GM12878 (cell line): ENCODE measurements at regions of chr22 and their contacts with region 1.

Region 1: DNA sequence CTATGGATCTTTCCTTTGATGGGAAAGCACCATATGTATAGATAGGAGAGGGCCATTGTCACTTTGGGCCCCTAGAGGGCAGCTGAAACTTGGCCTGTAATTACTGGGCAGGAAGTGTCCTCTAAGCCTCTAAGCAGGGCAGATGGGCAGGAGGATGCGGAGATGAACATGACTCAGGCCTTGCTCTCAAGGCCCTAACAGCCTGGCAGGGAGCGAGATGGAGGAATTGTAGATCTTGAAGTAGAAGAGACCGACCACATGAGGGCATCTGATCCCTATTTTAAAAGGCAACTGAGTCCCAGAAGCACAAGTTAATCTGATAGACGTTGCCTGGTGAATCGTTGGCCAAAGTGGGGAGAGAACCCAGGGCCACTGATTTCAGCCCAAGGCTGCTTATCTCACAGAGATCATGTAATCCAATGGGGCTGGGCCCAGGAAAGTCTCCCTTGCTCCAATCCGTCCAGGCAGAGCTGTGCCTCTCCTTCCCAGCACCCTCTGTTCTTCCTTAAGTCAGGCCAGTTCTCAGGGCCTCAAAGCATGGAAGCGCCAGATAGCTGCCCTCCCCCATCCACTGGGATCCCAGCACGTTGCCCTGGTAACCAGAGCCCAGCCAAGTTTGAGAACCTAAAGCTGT is 2.5 kb upstream of the SEPTIN3 start:
- DNase-seq: peak; percentile 54
- ATAC-seq: peak; percentile 89
- H3K4me3 ChIP-seq: no peak overlapping the region
- H3K27ac ChIP-seq: no peak overlapping the region
- H3K4me1 ChIP-seq: no peaks in the 10 kb centered on the region
- H3K27me3 ChIP-seq: no peaks in the 10 kb centered on the region
- CTCF ChIP-seq: peak; percentile 39 to 69 (median 67); a peak in 5 of 6 replicates
- EP300 ChIP-seq: no peak
- POLR2A ChIP-seq: no peak
- RAD21 ChIP-seq: peak; percentile 76

Region 2: GRCh38 chr22:41793871-41794270 is 172.9 kb before region 1 on chr22:
- CTCF ChIA-PET with region 1: no interaction called
- POLR2A ChIA-PET with region 1: interaction called, 10 read pairs
- RAD21 ChIA-PET with region 1: no interaction called
- SMC1A ChIA-PET with region 1: no interaction called
- in situ Hi-C with region 1: no loop called
- intact Hi-C with region 1: no loop called
- DNase-seq: no peak
- ATAC-seq: no peak
- H3K4me3 ChIP-seq: no peak overlapping the region
- H3K27ac ChIP-seq: no peak overlapping the region
- H3K4me1 ChIP-seq: no peaks in the 10 kb centered on the region
- H3K27me3 ChIP-seq: no peaks in the 10 kb centered on the region
- CTCF ChIP-seq: no peak
- EP300 ChIP-seq: no peak
- POLR2A ChIP-seq: no peak
- RAD21 ChIP-seq: no peak

Region 3: GRCh38 chr22:41841085-41841659 is 125.6 kb before region 1 on chr22:
- CTCF ChIA-PET with region 1: no interaction called
- POLR2A ChIA-PET with region 1: no interaction called
- RAD21 ChIA-PET with region 1: no interaction called
- SMC1A ChIA-PET with region 1: no interaction called
- in situ Hi-C with region 1: no loop called
- intact Hi-C with region 1: no loop called
- DNase-seq: no peak
- ATAC-seq: no peak
- H3K4me3 ChIP-seq: 0 out of 2 replicates have a peak overlapping the region, but pooled peaks have one; percentile 1
- H3K27ac ChIP-seq: no peak overlapping the region
- H3K4me1 ChIP-seq: peaks cover 22% of the 10 kb centered on the region
- H3K27me3 ChIP-seq: no peaks in the 10 kb centered on the region
- CTCF ChIP-seq: no peak
- EP300 ChIP-seq: no peak
- POLR2A ChIP-seq: no peak
- RAD21 ChIP-seq: no peak

Region 4: GRCh38 chr22:42079319-42080251 is 112.9 kb after region 1 on chr22 and contains the start of gene SMDT1:
- CTCF ChIA-PET with region 1: interaction called, 5 read pairs
- POLR2A ChIA-PET with region 1: interaction called, 8 read pairs
- RAD21 ChIA-PET with region 1: interaction called, 10 read pairs
- SMC1A ChIA-PET with region 1: interaction called, 3 read pairs
- in situ Hi-C with region 1: no loop called
- intact Hi-C with region 1: loop called (anchors 5 kb)
- DNase-seq: peak; percentile 99
- ATAC-seq: peak; percentile 95
- H3K4me3 ChIP-seq: peak within 1 kb of the TSS; percentile 81
- H3K27ac ChIP-seq: peak within 1 kb of the TSS; percentile 90
- H3K4me1 ChIP-seq: peaks cover 12% of the 10 kb centered on the region
- H3K27me3 ChIP-seq: no peaks in the 10 kb centered on the region
- CTCF ChIP-seq: no peak
- EP300 ChIP-seq: no peak
- POLR2A ChIP-seq: peak; percentile 94
- RAD21 ChIP-seq: no peak
- polyA plus RNA-seq, gene SMDT1: 25.5 to 63.1 TPM

Region 5: DNA sequence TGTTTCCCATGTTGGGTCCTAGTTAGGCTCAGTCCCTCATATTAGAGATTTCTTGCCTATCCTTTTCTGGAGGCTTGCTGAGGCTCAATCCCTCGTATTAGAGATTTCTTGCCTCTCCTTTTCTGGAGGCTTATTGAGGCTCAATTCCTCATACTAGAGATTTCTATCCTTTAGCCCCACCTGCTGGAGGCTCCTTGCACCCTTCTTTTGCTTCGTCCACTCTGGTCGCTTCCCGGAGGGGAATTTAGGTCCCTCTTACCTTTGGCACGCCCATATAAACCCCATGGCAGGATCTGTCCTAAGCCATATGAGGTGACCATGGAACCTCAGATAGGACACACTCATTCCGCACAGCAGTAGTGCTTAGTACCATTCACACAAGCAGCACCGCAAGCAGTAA is 148.0 kb after region 1 on chr22:
- CTCF ChIA-PET with region 1: interaction called, 57 read pairs
- POLR2A ChIA-PET with region 1: interaction called, 3 read pairs
- RAD21 ChIA-PET with region 1: interaction called, 9 read pairs
- SMC1A ChIA-PET with region 1: interaction called, 33 read pairs
- in situ Hi-C with region 1: no loop called
- intact Hi-C with region 1: loop called (anchors 1 kb)
- DNase-seq: no peak
- ATAC-seq: peak; percentile 19; the same call in 1 of the 3 replicates
- H3K4me3 ChIP-seq: no peak overlapping the region
- H3K27ac ChIP-seq: no peak overlapping the region
- H3K4me1 ChIP-seq: no peaks in the 10 kb centered on the region
- H3K27me3 ChIP-seq: no peaks in the 10 kb centered on the region
- CTCF ChIP-seq: peak in 2 of 3 experiments; percentile 20 to 34; a peak in 3 of 6 replicates
- EP300 ChIP-seq: no peak
- POLR2A ChIP-seq: no peak
- RAD21 ChIP-seq: peak; percentile 17; the same call in 1 of the 2 replicates

Region 6: DNA sequence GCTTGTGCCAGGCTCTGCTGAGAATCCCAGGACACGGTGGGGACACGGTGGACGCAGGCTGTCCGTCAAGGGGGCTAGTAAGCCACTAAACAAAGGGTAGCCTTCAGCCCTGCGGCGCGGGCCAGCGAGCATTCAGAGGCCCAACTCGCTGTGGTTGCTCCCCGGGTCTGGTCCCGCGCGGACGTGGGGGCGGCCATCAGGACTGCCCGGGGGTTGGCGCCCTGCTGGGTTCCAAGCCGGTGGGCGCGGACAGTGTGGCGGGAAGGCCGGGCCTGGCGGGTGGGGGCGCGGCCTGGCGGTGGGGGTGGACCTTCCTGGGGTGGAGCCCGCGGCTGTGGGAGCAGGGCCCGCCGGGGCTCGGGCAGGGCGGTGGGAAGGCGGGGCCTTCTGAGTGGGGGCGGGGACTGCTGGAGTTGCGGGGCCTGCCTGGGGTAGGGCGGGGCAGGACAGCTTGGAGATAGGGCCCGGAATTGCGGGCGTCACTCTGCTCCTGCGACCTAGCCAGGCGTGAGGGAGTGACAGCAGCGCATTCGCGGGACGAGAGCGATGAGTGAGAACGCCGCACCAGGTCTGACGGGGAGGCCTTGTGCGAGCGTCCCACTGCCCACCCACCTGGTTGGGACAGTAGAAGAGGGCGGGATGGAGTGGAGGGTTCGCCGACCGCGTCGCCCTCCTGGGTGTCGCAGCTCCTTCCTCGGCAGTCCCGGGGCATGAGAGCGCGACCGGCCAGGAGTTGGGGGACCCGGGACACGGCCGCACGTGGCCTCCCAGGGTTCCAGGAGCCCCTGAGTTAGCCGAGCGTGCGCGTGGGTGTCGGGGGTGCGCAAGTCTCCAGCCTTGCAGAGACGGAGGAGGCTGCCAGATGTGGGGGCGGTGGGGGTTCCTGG is 587.0 kb after region 1 on chr22 and contains the start of gene SERHL2:
- CTCF ChIA-PET with region 1: interaction called, 3 read pairs
- POLR2A ChIA-PET with region 1: no interaction called
- RAD21 ChIA-PET with region 1: no interaction called
- SMC1A ChIA-PET with region 1: no interaction called
- in situ Hi-C with region 1: no loop called
- intact Hi-C with region 1: loop called (anchors 5 kb)
- DNase-seq: peak; percentile 28
- ATAC-seq: peak; percentile 94
- H3K4me3 ChIP-seq: peak within 1 kb of the TSS; percentile 82
- H3K27ac ChIP-seq: 0 out of 2 replicates have a peak within 1 kb of the TSS, but pooled peaks have one; percentile 24
- H3K4me1 ChIP-seq: peaks cover 21% of the 10 kb centered on the region
- H3K27me3 ChIP-seq: no peaks in the 10 kb centered on the region
- CTCF ChIP-seq: no peak
- EP300 ChIP-seq: no peak
- POLR2A ChIP-seq: peak; percentile 43; the same call in 1 of the 2 replicates
- RAD21 ChIP-seq: no peak
- polyA plus RNA-seq, gene SERHL2: 0.63 to 0.93 TPM